ENCODE measurements at regions of chr19 and their contacts with region 1.

Region 1: DNA sequence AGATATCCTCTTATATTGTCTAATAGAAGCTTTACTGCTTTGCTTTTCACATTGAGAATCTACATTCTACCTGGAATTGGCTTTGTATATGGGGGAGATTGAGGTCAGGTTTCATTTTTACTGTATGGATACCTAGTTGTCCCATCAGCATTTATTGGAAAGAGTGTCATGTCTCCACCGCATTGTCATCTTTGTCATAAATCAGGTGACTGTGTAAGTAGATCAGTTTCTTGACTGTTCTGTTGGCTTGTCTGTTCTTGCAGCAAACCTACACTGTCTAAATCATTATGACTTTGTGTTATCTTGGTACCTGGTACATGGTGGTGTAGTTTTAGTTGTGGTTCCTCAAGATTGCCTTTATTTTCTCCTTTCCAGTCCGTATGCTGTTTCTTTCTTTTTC is 5.8 kb downstream of the URI1 start:
- DNase-seq: no peak
- ATAC-seq: no peak
- H3K4me3 ChIP-seq: no peak overlapping the region
- H3K27ac ChIP-seq: no peak overlapping the region
- H3K4me1 ChIP-seq: peaks cover 33 to 34% of the 10 kb centered on the region in 2 donors
- H3K27me3 ChIP-seq: no peaks in the 10 kb centered on the region
- CTCF ChIP-seq: no peak
- POLR2A ChIP-seq: no peak

Region 2: DNA sequence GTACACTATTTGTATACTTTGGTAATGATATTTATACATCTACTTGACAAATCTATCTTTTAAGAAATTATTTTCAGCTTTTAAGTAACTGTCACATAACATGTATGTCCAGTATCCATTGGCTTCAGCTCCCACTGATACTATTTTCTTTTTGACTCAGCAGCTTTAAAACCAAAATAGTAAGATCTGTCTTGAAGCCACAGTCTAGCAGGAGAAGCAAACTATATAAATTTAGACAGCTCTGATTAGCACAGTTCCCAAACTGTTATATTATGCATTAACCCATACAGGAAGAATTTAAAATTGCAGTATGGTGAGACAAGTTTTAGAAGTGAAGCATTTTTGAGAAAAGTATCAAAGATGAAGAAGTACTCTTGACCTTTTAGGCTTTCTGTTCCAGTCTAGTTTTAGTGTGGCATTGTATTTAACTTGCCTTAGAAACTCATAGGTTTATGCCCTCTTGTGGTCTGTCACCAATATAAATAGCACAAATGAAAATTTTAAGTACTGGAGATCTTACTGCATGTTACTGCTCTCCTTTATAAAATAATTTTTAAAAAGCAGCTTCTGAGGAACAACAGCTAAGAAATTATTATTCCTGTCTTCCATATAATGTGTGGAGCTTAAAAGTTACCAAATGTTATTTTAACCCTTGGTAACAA is 18.8 kb after region 1 on chr19:
- in situ Hi-C with region 1: no loop called
- intact Hi-C with region 1: loop called (anchors 2 kb)
- DNase-seq: no peak
- ATAC-seq: no peak
- H3K4me3 ChIP-seq: no peak overlapping the region
- H3K27ac ChIP-seq: no peak overlapping the region
- H3K4me1 ChIP-seq: peaks cover 57 to 60% of the 10 kb centered on the region in 2 donors
- H3K27me3 ChIP-seq: no peaks in the 10 kb centered on the region
- CTCF ChIP-seq: peak in 1 of 5 experiments; percentile 19
- POLR2A ChIP-seq: no peak

Region 3: GRCh38 chr19:29978080-29978479 is 30.2 kb after region 1 on chr19:
- in situ Hi-C with region 1: no loop called
- intact Hi-C with region 1: no loop called
- DNase-seq: no peak
- ATAC-seq: no peak
- H3K4me3 ChIP-seq: no peak overlapping the region
- H3K27ac ChIP-seq: no peak overlapping the region
- H3K4me1 ChIP-seq: peaks cover 20 to 23% of the 10 kb centered on the region in 2 donors
- H3K27me3 ChIP-seq: no peaks in the 10 kb centered on the region
- CTCF ChIP-seq: no peak
- POLR2A ChIP-seq: no peak